Panc1 (cell line): ENCODE measurements at regions of chr19 and their contacts with region 1.

Region 1: DNA sequence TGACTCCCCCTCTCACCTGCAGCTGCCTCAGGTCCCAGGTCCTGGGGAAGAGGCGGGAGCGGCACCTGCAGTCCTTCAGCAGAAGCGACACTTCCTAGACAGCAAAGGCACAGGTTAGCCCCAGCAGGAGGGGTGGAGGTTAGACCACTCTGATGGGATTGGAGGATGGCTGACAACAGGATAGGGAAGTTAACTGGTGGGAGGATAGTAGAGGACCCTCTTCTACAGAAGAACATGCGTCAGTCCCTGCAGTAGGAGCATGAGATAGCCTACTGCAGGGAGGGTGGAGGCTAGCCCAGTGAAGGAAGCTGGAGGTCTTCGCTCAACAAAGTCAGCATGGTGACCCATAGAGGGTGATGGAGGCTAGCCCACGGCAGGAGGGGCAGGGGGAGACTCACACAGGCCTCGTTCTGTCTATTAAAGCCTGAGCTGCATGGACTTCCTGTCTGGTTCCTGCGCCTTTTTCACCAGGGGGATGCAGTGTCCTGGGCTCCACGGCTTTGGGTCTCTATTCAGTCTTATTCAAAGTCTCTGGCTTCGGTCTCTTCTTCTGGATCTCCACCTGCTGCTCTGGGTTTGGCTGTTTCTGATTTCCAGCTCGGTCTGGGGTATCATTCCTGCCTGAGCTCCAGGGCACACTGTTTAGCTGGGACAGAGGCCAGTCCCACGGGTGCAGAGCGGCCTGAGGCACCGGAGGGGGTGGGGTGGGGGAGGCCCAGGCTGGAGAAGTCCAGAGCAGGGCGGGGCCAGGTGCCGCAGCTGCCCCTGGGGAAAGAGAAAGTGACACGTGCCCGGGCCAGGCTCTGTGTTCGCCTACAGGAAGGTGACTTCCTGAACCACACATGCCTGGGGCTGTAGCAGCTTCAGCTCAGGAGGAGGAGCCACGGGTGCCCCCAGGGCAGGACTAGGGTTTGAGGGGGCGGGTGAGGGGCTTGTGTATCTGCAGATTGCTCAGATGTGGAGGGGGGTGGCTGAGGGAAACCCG is 7.3 kb downstream of the IFNL3 start:
- DNase-seq: no peak
- ATAC-seq: peak; percentile 73
- H3K4me3 ChIP-seq: peak overlapping the region in 1 of 2 experiments; percentile 23; a peak in 2 of 4 replicates
- H3K27ac ChIP-seq: no peak overlapping the region
- H3K4me1 ChIP-seq: no peaks in the 10 kb centered on the region
- H3K27me3 ChIP-seq: no peaks in the 10 kb centered on the region
- CTCF ChIP-seq: no peak

Region 2: DNA sequence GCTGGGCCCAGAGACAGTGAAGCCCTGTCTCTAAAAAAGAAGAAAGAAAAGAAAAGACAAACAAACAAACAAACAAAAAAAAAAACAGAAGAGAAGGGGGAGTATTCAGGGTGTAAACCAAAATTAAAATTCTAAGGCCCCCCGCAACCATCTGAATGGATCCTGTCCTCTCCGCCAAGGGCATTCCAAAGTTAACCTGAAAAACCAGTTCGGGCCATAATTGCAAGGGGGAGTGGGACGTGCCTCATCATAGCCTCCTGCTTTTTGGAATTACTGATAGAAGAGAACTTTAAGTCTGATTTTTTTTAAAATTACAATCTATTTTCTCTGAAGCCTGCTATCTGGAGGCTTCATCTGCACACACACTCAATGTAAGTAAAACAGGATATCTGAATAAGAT is 25.0 kb after region 1 on chr19:
- CTCF ChIA-PET with region 1: interaction called, 4 read pairs
- POLR2A ChIA-PET with region 1: interaction called, 10 read pairs
- in situ Hi-C with region 1: no loop called
- intact Hi-C with region 1: no loop called
- DNase-seq: no peak
- ATAC-seq: no peak
- H3K4me3 ChIP-seq: no peak overlapping the region
- H3K27ac ChIP-seq: no peak overlapping the region
- H3K4me1 ChIP-seq: no peaks in the 10 kb centered on the region
- H3K27me3 ChIP-seq: peaks cover 9% of the 10 kb centered on the region
- CTCF ChIP-seq: no peak

Region 3: DNA sequence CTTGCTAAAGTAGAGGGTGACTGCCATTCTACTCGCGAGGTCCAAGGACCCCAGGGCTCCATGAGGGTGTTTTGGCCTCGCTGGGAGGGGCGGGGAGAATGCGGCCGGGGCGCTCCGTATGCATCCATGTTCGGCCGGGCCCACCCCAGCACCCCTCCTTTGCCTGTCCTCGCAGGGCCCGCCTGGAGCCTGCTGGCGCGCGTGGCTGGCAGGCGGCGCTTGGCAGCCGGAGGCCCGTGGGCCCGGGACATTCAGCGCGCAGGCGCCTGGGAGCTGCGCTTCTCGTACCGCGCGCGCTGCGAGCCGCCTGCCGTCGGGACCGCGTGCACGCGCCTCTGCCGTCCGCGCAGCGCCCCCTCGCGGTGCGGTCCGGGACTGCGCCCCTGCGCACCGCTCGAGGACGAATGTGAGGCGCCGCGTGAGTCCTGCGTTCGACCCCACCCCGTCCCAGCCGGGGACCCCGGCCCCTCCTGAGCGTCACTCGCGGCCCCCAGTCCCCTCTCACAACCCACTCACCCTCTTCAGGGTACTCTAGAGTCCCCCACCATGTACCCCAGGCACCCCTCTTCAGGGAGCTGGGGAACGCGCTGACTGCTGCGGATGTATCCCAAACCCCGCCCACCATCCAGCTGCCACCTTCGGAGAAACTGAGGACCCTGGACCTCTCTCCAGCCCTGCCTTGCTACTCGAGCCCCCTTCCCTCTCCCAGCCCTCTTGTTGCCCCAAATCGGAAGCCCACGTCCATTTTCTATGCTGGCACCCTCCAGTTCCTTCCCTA is 265.3 kb after region 1 on chr19:
- CTCF ChIA-PET with region 1: no interaction called
- POLR2A ChIA-PET with region 1: no interaction called
- in situ Hi-C with region 1: no loop called
- intact Hi-C with region 1: no loop called
- DNase-seq: peak; percentile 93
- ATAC-seq: peak; percentile 24
- H3K4me3 ChIP-seq: peak overlapping the region in 1 of 2 experiments; percentile 34; a peak in 2 of 4 replicates
- H3K27ac ChIP-seq: peak overlapping the region; percentile 3; the same call in 1 of the 2 replicates
- H3K4me1 ChIP-seq: peaks cover 27% of the 10 kb centered on the region
- H3K27me3 ChIP-seq: peaks cover 8% of the 10 kb centered on the region
- CTCF ChIP-seq: no peak